Naive thymus-derived CD4-positive, alpha-beta T cell (primary cell): ENCODE measurements at regions of chr13 and their contacts with region 1.

Region 1: DNA sequence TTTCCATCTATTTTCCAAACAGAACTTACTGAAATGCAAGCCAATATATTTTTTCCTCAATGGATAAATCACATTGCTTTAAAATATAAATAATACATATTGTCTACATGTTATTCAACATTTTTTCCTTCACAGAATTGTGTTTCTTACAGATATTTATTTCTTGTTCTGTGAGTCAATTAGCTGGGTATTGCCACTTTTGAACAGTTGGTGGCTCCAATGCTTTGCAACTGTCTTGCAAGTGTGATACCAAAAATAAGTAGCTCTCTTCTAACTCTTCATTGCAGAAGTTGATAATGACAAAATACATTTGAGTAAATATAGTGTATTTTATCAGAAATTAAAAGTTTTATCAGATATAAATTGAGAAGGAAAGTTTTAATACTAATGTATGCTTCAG is 17.1 kb upstream of the GPC5 start:
- DNase-seq: no peak
- ATAC-seq: no peak
- H3K4me3 ChIP-seq: no peak overlapping the region
- H3K4me3 Mint-ChIP-seq: no peak overlapping the region
- H3K27ac ChIP-seq: no peak overlapping the region
- H3K27ac Mint-ChIP-seq: no peak overlapping the region
- H3K4me1 ChIP-seq: no peaks in the 10 kb centered on the region
- H3K4me1 Mint-ChIP-seq: peaks cover 0 to 3% (median 0%) of the 10 kb centered on the region in 7 donors
- H3K27me3 ChIP-seq: no peaks in the 10 kb centered on the region
- H3K27me3 Mint-ChIP-seq: peaks cover 2 to 25% (median 13%) of the 10 kb centered on the region in 5 donors

Region 2: DNA sequence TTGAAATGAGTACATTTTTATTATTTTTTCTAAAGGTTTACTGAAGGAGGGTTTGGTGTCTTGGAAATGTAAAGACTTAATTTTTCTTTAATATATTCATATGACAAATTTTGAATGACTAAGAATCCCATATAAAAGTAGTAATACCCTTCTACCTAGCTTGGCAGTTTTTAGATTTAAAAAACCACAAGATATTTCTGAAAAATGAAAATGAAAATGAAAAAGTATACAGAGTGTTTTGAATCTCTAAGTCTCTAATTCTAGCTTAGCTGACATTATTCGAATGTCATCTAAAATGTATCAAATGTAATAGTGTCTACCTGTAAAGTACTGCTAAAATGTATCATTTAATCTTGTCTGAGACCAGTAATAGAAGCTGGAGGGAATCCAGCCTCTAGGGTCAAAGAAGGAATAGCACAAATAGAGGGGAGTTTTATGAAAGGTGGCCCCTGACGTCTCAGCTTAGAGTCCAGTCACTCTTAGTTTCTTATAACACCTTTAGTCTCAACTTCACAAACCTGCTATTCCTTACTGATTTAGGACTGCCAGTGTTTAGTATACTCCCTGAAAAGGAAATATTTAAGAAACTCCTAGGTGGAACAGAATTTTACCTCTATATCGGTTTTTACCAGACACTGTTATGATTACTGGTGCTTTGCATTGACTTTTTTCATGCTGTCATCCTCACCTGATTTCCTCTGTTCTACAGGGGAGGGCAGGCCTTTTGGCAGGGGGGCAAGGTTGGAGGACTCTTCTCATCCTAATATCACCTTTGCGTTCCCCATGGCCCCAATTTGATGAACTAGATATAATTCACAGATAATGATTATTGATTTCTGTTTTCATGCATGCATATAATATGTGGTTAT is 50.1 kb before region 1 on chr13:
- CTCF ChIA-PET with region 1: no interaction called
- POLR2A ChIA-PET with region 1: no interaction called
- intact Hi-C with region 1: no loop called
- DNase-seq: no peak
- ATAC-seq: no peak
- H3K4me3 ChIP-seq: no peak overlapping the region
- H3K4me3 Mint-ChIP-seq: peak overlapping the region in 1 of 10 donors; percentile 64
- H3K27ac ChIP-seq: no peak overlapping the region
- H3K27ac Mint-ChIP-seq: peak overlapping the region in 1 of 9 donors; percentile 62
- H3K4me1 ChIP-seq: no peaks in the 10 kb centered on the region
- H3K4me1 Mint-ChIP-seq: peaks cover 0 to 19% (median 0%) of the 10 kb centered on the region in 7 donors
- H3K27me3 ChIP-seq: no peaks in the 10 kb centered on the region
- H3K27me3 Mint-ChIP-seq: peaks cover 0 to 7% (median 0%) of the 10 kb centered on the region in 5 donors

Region 3: GRCh38 chr13:91426913-91427312 is 45.5 kb after region 1 on chr13:
- CTCF ChIA-PET with region 1: no interaction called
- POLR2A ChIA-PET with region 1: no interaction called
- intact Hi-C with region 1: no loop called
- DNase-seq: no peak
- ATAC-seq: no peak
- H3K4me3 ChIP-seq: no peak overlapping the region
- H3K4me3 Mint-ChIP-seq: no peak overlapping the region
- H3K27ac ChIP-seq: no peak overlapping the region
- H3K27ac Mint-ChIP-seq: no peak overlapping the region
- H3K4me1 ChIP-seq: no peaks in the 10 kb centered on the region
- H3K4me1 Mint-ChIP-seq: no peaks in the 10 kb centered on the region
- H3K27me3 ChIP-seq: no peaks in the 10 kb centered on the region
- H3K27me3 Mint-ChIP-seq: peaks cover 0 to 20% (median 18%) of the 10 kb centered on the region in 5 donors

Region 4: GRCh38 chr13:91722267-91722884 is 341.0 kb after region 1 on chr13:
- CTCF ChIA-PET with region 1: interaction called, 3 read pairs
- POLR2A ChIA-PET with region 1: no interaction called
- intact Hi-C with region 1: loop called in 1 of 2 experiments (anchors 1 kb)
- DNase-seq: peak in 5 of 9 donors; percentile 1 to 26 (median 10)
- ATAC-seq: no peak
- H3K4me3 ChIP-seq: no peak overlapping the region
- H3K4me3 Mint-ChIP-seq: no peak overlapping the region
- H3K27ac ChIP-seq: no peak overlapping the region
- H3K27ac Mint-ChIP-seq: no peak overlapping the region
- H3K4me1 ChIP-seq: no peaks in the 10 kb centered on the region
- H3K4me1 Mint-ChIP-seq: peaks cover 0 to 2% (median 0%) of the 10 kb centered on the region in 7 donors
- H3K27me3 ChIP-seq: no peaks in the 10 kb centered on the region
- H3K27me3 Mint-ChIP-seq: peaks cover 0 to 11% (median 2%) of the 10 kb centered on the region in 5 donors

Region 5: DNA sequence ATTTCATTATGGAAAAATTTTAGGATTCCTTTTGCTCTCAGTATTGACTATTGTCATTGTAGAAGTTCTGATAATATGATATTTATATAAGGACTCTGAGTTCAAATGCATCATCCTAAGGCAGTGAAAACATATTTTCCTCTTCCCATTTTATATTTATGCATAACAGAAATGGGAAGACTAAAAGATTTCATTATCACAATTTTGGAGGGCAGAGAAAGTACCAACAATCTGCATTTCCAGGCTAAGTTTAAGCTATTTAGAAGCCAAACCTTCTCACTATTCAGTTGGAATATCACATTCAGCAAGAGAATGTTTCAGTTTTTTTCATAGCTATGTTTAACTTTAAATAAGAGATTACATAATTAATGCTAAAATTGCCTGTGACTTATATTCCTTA is 1286.8 kb after region 1 on chr13:
- CTCF ChIA-PET with region 1: no interaction called
- POLR2A ChIA-PET with region 1: no interaction called
- intact Hi-C with region 1: no loop called
- DNase-seq: no peak
- ATAC-seq: no peak
- H3K4me3 ChIP-seq: no peak overlapping the region
- H3K4me3 Mint-ChIP-seq: no peak overlapping the region
- H3K27ac ChIP-seq: no peak overlapping the region
- H3K27ac Mint-ChIP-seq: no peak overlapping the region
- H3K4me1 ChIP-seq: no peaks in the 10 kb centered on the region
- H3K4me1 Mint-ChIP-seq: no peaks in the 10 kb centered on the region
- H3K27me3 ChIP-seq: no peaks in the 10 kb centered on the region
- H3K27me3 Mint-ChIP-seq: no peaks in the 10 kb centered on the region